AG04449 (cell line): ENCODE measurements at regions of chr11 and their contacts with region 1.

Region 1: DNA sequence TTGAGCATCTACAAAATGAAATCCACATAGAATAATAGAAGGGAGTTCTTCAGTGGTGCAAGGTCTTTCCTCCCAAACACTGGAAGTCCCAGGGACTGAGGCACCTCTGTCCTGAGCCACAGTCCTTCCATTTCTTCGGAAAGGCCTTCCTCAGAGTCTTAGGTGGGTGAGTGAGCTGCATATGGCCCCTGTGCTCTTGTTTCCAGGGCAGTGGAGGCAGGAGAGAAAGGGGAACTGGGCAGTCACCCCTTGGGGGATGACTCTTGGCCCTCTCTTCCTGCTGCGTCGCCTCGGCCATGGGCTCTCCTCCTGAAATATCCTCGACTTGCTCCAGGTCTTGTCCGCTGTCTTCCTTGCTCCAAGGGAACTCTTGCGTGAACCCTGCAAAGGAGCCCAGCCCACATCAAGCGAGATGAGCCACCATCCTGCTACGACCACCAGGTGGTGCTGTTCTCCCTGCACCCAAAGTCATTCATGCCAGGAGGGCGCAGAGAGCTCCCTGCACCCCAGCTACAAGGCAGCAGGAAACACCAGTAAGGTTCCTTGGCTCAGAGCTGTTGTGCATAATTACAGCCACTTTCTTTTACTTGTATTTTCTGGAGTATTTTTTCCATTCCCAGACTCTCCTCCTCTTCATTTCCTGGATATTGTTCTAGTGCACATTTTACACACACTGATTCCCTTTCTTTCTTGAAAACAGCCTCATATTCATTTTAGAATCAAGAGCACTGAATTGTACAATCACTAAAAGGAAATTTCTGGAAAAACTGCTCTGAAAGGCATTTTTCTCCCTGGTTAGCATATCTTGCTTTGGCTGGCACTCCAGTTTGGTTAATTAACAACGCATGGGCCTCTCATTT is 397.8 kb downstream of the OPCML start:
- DNase-seq: no peak
- H3K4me3 ChIP-seq: no peak overlapping the region
- CTCF ChIP-seq: peak; percentile 88

Region 2: DNA sequence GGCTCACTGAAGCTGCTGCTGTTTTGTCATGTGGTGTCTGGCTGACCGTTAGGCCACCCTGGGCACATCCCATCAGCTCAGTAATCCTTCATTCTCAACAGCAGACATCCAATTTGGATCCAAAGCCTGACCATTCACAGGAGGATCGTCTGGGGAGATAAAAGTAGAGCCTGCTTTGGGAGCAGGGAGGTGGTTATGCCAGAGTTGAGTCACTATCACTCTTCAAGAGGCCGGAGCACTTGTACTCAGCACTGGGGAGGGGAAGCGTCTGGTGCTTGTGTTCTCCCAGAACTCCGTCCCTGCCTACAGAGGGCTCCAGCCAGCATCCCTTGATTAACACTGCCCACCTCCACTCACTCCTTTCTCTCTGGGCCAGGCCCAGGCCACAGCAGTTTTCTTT is 15.2 kb after region 1 on chr11:
- CTCF ChIA-PET with region 1: interaction called, 15 read pairs
- POLR2A ChIA-PET with region 1: no interaction called
- DNase-seq: no peak
- H3K4me3 ChIP-seq: no peak overlapping the region
- CTCF ChIP-seq: no peak

Region 3: GRCh38 chr11:133163463-133164419 is 29.2 kb after region 1 on chr11:
- CTCF ChIA-PET with region 1: interaction called, 13 read pairs
- POLR2A ChIA-PET with region 1: no interaction called
- DNase-seq: peak; percentile 17
- H3K4me3 ChIP-seq: no peak overlapping the region
- CTCF ChIP-seq: peak; percentile 67